ENCODE measurements at regions of chr7 and their contacts with region 1.

Region 1: GRCh38 chr7:74449809-74450397 is 3.8 kb upstream of the GTF2IRD1 start:
- DNase-seq: no peak
- H3K4me3 ChIP-seq: no peak overlapping the region
- H3K27ac ChIP-seq: no peak overlapping the region
- H3K4me1 ChIP-seq: peaks cover 20% of the 10 kb centered on the region
- H3K27me3 ChIP-seq: no peaks in the 10 kb centered on the region
- CTCF ChIP-seq: peak; percentile 23 to 78 (median 70)
- POLR2A ChIP-seq: no peak

Region 2: GRCh38 chr7:74479961-74480829 is 30.3 kb after region 1 on chr7:
- intact Hi-C with region 1: loop called (anchors 2 kb)
- DNase-seq: no peak
- H3K4me3 ChIP-seq: peak overlapping the region; percentile 37 to 46
- H3K27ac ChIP-seq: peak overlapping the region; percentile 97
- H3K4me1 ChIP-seq: peaks cover 87% of the 10 kb centered on the region
- H3K27me3 ChIP-seq: no peaks in the 10 kb centered on the region
- CTCF ChIP-seq: no peak
- POLR2A ChIP-seq: no peak

Region 3: DNA sequence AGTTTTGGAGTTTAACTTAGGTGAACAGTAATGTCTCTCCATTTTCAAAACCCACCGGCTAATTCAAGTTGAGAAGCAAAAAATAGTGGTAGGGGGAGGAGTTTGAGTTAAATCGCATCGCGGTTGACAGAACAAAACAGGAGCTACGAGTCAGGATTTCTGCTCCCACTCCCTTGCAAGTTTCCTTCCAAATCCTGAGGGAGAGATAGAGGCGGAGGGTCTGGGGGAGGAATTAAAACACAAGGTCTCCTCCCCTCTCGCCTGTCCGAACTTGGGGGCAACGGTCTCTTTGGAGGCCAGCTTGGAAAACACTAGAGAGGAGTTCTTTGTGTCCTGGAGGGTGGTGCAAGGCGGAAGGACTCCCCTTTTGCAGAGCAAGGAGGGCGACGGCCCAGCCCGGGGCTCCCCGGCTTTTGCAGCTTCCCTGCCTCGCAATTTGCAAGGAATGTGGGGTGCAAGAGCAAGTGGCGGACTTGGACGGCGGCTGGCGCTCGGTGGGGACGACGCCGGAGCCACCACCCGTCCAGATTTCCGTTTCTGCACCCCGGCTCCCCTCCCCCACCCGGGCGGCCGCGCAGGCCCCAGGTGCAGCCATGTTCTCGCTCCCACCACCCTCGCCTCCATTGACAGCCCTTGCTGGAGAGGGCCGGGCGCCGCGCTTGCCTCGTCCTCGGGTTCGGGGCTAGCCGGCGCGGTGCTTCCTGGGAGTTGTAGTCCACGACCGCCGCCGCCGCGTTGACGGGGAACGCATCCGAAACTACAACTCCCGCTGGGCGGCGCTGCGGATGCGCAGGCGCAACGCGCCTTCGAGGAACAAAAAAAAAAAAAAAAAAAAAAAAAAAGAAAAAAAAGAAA is 207.2 kb after region 1 on chr7:
- intact Hi-C with region 1: loop called (anchors 10 kb)
- DNase-seq: peak in 1 of 2 donors; percentile 95
- H3K4me3 ChIP-seq: peak overlapping the region; percentile 93 to 99
- H3K27ac ChIP-seq: peak overlapping the region; percentile 100
- H3K4me1 ChIP-seq: peaks cover 41% of the 10 kb centered on the region
- H3K27me3 ChIP-seq: no peaks in the 10 kb centered on the region
- CTCF ChIP-seq: no peak
- POLR2A ChIP-seq: no peak

Region 4: GRCh38 chr7:75866489-75867389 is 1416.8 kb after region 1 on chr7:
- intact Hi-C with region 1: no loop called
- DNase-seq: no peak
- H3K4me3 ChIP-seq: no peak overlapping the region
- H3K27ac ChIP-seq: no peak overlapping the region
- H3K4me1 ChIP-seq: no peaks in the 10 kb centered on the region
- H3K27me3 ChIP-seq: no peaks in the 10 kb centered on the region
- CTCF ChIP-seq: peak; percentile 67 to 84 (median 67)
- POLR2A ChIP-seq: no peak

Measured in vagina (tissue), 2 donors.